Posterior cingulate gyrus (tissue), 11 donors: ENCODE measurements at regions of chr13 and their contacts with region 1.

Region 1: DNA sequence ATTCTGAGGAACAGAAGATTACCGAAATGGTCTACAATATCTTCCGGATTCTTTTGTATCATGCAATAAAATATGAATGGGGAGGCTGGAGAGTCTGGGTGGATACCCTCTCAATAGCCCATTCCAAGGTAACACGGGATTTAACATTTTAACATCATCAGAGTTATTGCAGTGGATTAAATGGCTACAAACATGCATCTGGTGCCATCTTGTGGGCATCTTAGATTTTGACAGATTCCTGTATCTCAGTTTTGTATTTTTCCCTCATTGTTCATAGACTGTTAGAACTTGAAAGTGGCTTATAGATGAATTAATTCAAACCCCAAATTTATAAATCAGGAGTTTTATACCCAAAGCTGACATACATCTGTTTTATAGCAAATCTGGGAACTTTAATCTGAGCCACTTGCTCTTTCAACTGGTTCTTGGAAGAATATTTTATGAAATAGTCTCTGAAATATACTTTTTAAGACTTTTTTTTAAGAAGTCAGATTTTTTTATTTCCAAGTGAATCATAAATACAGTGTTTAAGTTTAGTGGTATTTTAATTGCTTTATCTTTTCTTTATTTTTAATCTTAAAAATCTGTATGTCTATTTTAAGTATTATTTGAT is 215.2 kb downstream of the NBEA start:
- DNase-seq: peak in 1 of 10 donors; percentile 24

Region 2: GRCh38 chr13:33799950-33800592 is 1357.2 kb before region 1 on chr13:
- intact Hi-C with region 1: loop called (anchors 5 kb)
- DNase-seq: no peak

Region 3: DNA sequence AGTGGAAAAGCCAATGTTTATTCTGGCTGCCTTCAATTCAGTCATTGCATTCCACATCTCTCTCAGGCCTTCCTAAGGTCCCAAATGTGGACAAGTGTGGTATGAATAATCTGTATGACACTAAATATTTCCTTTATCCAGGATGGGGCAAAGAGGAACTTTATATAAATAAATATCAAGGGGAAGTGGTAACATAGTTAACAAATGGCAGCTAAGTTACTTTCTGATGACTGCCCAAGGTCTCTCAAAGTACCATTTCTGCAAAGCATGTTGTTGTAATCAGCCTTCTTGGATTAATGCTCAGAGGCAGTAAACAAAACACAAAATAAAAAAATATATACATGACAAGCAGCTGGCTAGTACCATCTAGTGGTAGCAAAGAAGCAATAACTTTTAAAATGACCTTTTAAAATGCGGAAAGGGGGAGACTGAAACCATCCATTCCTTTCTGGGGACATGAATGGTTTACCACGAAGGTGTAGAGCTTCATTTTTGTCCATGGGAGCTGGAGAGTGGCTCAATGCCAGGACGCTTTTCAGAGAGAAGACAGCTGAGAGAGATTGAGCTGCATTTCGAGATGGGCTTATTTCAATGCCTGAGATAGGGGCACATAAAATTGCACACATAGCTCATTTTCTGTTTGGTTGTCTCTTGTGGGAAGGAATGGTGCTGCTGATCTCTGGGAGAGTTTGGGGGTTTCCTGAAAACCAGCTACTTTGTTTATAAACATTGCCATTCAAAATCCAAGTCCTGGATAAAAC is 1080.1 kb before region 1 on chr13:
- intact Hi-C with region 1: loop called (anchors 10 kb)
- DNase-seq: no peak

Region 4: DNA sequence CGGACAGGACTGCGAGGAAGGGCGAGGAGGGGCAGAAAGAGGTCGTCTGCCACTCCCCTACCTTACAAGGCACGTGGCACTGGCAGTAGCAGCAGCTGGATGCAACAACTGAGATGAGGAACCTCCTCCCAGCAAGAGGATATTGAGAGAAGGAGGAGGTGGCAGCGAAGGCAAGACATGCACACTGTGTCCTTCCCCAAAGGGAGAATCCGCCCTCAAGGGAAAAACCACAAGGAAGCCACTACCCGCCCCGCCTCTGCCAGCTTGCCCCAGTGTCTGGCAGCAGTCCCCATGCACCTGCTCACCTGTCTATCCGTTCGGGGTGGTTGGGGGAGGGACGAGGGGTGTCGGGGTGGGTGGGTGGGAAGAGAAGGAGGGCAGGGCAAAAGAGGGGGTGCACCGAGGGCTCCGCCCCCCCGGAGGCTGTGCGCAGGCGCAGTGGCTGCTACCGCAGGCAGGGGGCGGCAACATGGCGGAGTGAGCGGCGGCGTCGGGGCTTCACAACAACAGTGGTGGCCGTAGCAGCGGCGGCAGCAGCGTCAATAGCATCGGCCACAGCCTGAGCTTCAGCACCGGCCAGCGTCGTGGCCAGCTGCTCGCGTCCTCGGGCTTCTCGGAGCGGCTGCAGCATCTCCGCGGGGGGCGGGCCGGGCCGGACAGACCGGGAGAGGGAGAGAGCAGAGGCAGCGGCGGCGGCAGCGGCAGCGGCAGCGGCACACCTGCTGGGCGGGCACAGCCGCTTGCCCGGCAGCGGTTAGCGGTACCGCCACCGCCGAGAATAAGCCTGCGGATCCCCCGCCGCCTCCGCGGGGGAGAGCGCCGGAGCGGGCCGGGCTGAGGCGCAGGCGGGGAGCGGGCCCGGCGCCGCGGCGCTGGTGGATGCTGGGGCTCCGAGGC is 215.2 kb before region 1 on chr13 and contains the start of gene NBEA:
- intact Hi-C with region 1: loop called (anchors 10 kb)
- DNase-seq: peak; percentile 72 to 96 (median 82)